Esophagus squamous epithelium (tissue), 5 donors: ENCODE measurements at regions of chr15 and their contacts with region 1.

Region 1: GRCh38 chr15:99213187-99213811 is 36.1 kb downstream of the TTC23 start:
- DNase-seq: no peak
- H3K4me3 ChIP-seq: no peak overlapping the region
- H3K27ac ChIP-seq: peak overlapping the region in 2 of 4 donors; percentile 66 to 73
- H3K4me1 ChIP-seq: no peaks in the 10 kb centered on the region
- H3K27me3 ChIP-seq: no peaks in the 10 kb centered on the region
- CTCF ChIP-seq: peak; percentile 33 to 89 (median 84)
- POLR2A ChIP-seq: no peak

Region 2: GRCh38 chr15:99104788-99105513 is 108.3 kb before region 1 on chr15 and contains the start of gene SYNM:
- intact Hi-C with region 1: loop called (anchors 5 kb)
- DNase-seq: no peak
- H3K4me3 ChIP-seq: peak within 1 kb of the TSS; percentile 43 to 66 (median 56)
- H3K27ac ChIP-seq: peak within 1 kb of the TSS; percentile 65 to 89 (median 82)
- H3K4me1 ChIP-seq: peaks cover 4 to 35% (median 21%) of the 10 kb centered on the region in 3 donors
- H3K27me3 ChIP-seq: peaks cover 0 to 76% (median 0%) of the 10 kb centered on the region in 4 donors
- CTCF ChIP-seq: peak; percentile 59 to 89 (median 84)
- POLR2A ChIP-seq: peak in 2 of 4 donors; percentile 74 to 89
- total RNA-seq, gene SYNM: 18.1 to 262 (median 42.0) TPM

Region 3: DNA sequence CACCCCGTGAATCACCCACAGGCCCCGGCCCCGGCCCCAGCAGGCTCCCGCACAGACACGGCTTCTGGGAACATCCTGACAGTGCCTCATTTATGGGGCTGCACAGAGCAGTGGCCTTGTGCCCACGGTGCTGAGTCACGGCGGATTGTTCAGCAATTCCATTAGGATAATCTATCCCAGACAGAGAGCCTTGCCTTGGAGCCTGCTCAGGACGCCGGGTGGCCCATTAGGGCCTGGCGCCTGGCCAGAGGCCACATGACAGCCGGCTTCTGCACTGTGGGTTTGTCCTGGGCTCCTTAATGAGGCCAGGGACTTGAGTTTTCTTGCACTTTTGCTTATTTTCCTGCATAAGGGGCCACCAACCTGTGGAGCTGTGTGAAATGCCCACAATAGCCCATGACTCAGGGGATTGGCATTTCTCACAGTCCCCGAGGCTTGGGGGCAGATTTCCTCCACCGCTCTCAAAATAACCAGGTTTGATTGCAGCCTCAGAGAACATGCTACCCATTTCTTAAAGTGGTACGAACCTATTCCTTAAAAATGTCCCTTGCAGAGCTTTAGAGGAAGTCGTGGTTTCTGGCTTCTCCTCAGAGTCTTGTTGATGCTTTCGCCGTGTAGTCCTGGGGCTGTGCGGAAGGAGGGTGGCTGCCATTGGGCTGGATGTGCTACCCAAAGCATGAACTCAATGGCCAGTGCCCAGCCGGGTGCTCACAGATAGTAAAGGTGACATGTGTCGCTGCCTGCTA is 89.4 kb before region 1 on chr15:
- intact Hi-C with region 1: no loop called
- DNase-seq: no peak
- H3K4me3 ChIP-seq: peak overlapping the region in 3 of 4 donors; percentile 21 to 53 (median 29)
- H3K27ac ChIP-seq: peak overlapping the region; percentile 67 to 86 (median 84)
- H3K4me1 ChIP-seq: peaks cover 14 to 62% (median 18%) of the 10 kb centered on the region in 3 donors
- H3K27me3 ChIP-seq: no peaks in the 10 kb centered on the region
- CTCF ChIP-seq: no peak
- POLR2A ChIP-seq: no peak